ENCODE measurements at regions of chr20 and their contacts with region 1.

Region 1: GRCh38 chr20:59087829-59088433 is 45.3 kb upstream of the PRELID3B start:
- DNase-seq: peak; percentile 93
- ATAC-seq: peak; percentile 81
- H3K4me3 Mint-ChIP-seq: no peak overlapping the region
- H3K27ac Mint-ChIP-seq: no peak overlapping the region
- H3K4me1 Mint-ChIP-seq: peaks cover 4% of the 10 kb centered on the region
- H3K27me3 Mint-ChIP-seq: no peaks in the 10 kb centered on the region

Region 2: GRCh38 chr20:59102841-59103299 is 14.9 kb after region 1 on chr20:
- CTCF ChIA-PET with region 1: interaction called, 26 read pairs
- POLR2A ChIA-PET with region 1: no interaction called
- intact Hi-C with region 1: no loop called
- DNase-seq: no peak
- ATAC-seq: peak; percentile 82
- H3K4me3 Mint-ChIP-seq: no peak overlapping the region
- H3K27ac Mint-ChIP-seq: peak overlapping the region; percentile 61
- H3K4me1 Mint-ChIP-seq: peaks cover 12% of the 10 kb centered on the region
- H3K27me3 Mint-ChIP-seq: no peaks in the 10 kb centered on the region

Region 3: GRCh38 chr20:59120491-59120890 is 32.6 kb after region 1 on chr20:
- CTCF ChIA-PET with region 1: interaction called, 10 read pairs
- POLR2A ChIA-PET with region 1: no interaction called
- intact Hi-C with region 1: no loop called
- DNase-seq: peak; percentile 43
- ATAC-seq: peak; percentile 10
- H3K4me3 Mint-ChIP-seq: peak overlapping the region; percentile 22
- H3K27ac Mint-ChIP-seq: peak overlapping the region; percentile 71
- H3K4me1 Mint-ChIP-seq: peaks cover 78% of the 10 kb centered on the region
- H3K27me3 Mint-ChIP-seq: no peaks in the 10 kb centered on the region

Region 4: GRCh38 chr20:59159493-59160376 is 71.8 kb after region 1 on chr20:
- CTCF ChIA-PET with region 1: interaction called, 12 read pairs
- POLR2A ChIA-PET with region 1: no interaction called
- intact Hi-C with region 1: loop called (anchors 2 to 5 kb)
- DNase-seq: peak; percentile 75
- ATAC-seq: peak; percentile 83
- H3K4me3 Mint-ChIP-seq: peak overlapping the region; percentile 80
- H3K27ac Mint-ChIP-seq: peak overlapping the region; percentile 97
- H3K4me1 Mint-ChIP-seq: peaks cover 82% of the 10 kb centered on the region
- H3K27me3 Mint-ChIP-seq: no peaks in the 10 kb centered on the region

Region 5: DNA sequence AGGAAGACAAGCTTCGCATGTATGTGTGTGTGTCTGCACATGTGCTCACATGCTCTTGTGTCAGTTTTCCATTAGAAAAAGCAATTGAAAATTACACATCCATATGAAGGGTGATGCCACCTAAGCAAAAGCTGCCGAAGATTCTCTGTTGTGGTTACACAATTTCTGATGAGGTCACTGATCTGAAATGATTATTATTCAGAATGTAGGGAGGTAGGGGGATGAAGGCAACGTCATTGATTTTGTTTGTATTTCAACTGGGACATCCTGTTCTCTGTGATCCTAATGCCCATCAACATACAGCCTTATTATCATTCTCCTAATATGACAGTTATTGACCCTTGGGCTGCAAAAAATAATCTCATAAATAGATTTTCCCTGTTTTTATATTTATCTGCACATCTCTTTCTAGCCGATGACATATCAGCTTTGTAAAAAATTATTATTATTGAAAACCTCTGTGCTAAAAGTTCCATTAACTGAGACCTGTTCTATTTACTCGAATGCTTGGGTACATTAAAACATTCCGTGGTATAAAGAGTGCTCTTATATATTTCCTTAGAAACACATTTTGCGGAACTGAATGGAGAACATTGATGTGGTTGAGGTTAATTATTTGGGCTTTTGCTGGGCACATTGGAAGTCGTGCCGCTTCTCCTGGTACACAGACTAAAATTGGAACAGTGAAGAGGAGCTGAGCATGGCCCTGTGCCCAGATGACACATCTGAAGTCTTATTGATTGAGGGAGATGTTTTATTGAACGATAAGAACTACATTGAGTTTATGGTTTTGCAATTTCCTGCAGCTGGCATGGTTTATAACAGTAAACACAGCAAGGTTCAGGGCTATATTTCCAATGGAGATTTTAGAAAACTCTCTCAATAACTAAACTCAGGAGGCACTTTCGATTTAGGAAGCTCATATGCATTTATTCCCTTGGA is 126.9 kb after region 1 on chr20:
- CTCF ChIA-PET with region 1: interaction called, 10 read pairs
- POLR2A ChIA-PET with region 1: interaction called, 3 read pairs
- intact Hi-C with region 1: no loop called
- DNase-seq: no peak
- ATAC-seq: no peak
- H3K4me3 Mint-ChIP-seq: no peak overlapping the region
- H3K27ac Mint-ChIP-seq: no peak overlapping the region
- H3K4me1 Mint-ChIP-seq: no peaks in the 10 kb centered on the region
- H3K27me3 Mint-ChIP-seq: no peaks in the 10 kb centered on the region

Region 6: DNA sequence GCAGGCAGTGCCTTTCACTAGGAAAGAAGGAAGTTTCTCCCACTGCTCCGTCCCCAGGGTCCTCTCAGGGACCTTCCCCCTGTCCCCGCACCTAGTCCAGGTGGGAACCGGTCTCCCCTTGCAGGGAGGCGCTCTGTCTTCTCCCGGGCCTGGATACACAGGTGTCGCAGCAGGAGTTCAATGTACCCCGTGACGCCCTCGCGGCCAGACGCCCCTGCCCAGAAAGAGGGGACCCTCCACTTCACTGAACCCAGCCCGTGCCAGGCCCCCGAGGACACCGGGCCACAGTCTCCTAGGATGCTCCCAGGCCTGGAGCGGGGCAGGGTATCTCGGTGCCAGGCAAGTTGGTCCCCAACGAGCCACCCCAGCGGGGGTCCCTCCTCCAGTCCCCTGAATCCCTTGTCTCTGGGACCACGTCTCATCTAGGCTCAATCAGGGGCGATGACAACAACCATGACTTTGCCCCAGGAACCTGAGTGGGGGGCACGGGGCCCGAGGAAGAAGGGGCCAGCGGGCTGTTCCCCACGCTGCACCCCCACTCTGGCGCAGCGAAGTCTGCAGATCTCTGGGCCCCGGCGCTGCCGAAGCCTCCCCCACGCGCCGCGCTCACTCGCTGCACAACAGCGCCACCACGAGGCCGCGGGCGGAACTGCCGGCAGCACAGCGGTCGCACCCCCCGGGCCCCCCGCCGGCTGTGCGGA is 315.5 kb after region 1 on chr20:
- CTCF ChIA-PET with region 1: interaction called, 6 read pairs
- POLR2A ChIA-PET with region 1: no interaction called
- intact Hi-C with region 1: loop called (anchors 1 kb)
- DNase-seq: peak; percentile 89
- ATAC-seq: peak; percentile 72
- H3K4me3 Mint-ChIP-seq: no peak overlapping the region
- H3K27ac Mint-ChIP-seq: peak overlapping the region; percentile 71
- H3K4me1 Mint-ChIP-seq: no peaks in the 10 kb centered on the region
- H3K27me3 Mint-ChIP-seq: peaks cover 2% of the 10 kb centered on the region

Region 7: GRCh38 chr20:59530782-59531181 is 442.9 kb after region 1 on chr20:
- CTCF ChIA-PET with region 1: no interaction called
- POLR2A ChIA-PET with region 1: no interaction called
- intact Hi-C with region 1: no loop called
- DNase-seq: no peak
- ATAC-seq: no peak
- H3K4me3 Mint-ChIP-seq: no peak overlapping the region
- H3K27ac Mint-ChIP-seq: no peak overlapping the region
- H3K4me1 Mint-ChIP-seq: no peaks in the 10 kb centered on the region
- H3K27me3 Mint-ChIP-seq: peaks cover 29% of the 10 kb centered on the region